Calu3 (cell line): ENCODE measurements at regions of chr22 and their contacts with region 1.

Region 1: DNA sequence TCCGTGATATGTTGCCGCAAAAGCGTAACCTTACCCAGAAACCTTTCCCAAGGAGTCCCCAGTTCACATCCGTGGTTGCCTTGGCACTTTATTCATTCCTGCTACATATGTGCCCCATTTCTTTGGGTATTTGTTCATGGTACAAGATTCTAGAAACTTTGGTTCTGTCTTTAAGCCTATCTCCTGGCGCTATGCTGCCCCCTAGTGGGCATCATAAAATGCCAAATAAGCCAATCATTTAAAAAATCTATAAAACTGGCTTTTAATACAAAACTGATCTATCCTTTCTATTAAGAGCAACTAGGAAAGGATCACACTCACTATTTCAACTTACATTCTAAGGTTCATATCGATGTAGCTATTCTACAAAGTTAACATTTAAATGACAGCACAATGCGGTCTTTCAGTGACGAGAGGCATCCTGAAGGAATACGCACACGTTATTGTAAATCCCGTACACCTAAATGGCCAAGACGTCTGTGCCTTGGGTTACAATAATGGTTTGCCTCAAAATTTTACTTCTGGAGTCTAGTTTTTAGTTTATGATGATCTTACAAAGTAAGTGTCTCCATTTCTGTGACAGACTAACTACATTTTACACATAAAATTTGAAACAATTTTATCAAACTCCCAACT is 16.2 kb downstream of the PIWIL3 start:
- DNase-seq: peak; percentile 65
- H3K4me3 Mint-ChIP-seq: no peak overlapping the region
- H3K27ac Mint-ChIP-seq: no peak overlapping the region
- H3K4me1 Mint-ChIP-seq: no peaks in the 10 kb centered on the region
- H3K27me3 Mint-ChIP-seq: peaks cover 10% of the 10 kb centered on the region
- CTCF ChIP-seq: peak; percentile 91

Region 2: GRCh38 chr22:24707470-24707801 is 50.8 kb before region 1 on chr22:
- CTCF ChIA-PET with region 1: no interaction called
- intact Hi-C with region 1: loop called (anchors 2 kb)
- DNase-seq: no peak
- H3K4me3 Mint-ChIP-seq: no peak overlapping the region
- H3K27ac Mint-ChIP-seq: no peak overlapping the region
- H3K4me1 Mint-ChIP-seq: no peaks in the 10 kb centered on the region
- H3K27me3 Mint-ChIP-seq: peaks cover 80% of the 10 kb centered on the region
- CTCF ChIP-seq: no peak